HEK293 (cell line): ENCODE measurements at regions of chr20 and their contacts with region 1.

Region 1: GRCh38 chr20:17938871-17939619 is 29.5 kb downstream of the SNX5 start:
- H3K4me3 ChIP-seq: no peak overlapping the region
- H3K27ac ChIP-seq: peak overlapping the region; percentile 19; the same call in 1 of the 2 replicates
- H3K4me1 ChIP-seq: peaks cover 5% of the 10 kb centered on the region; the same call in 1 of the 2 replicates
- CTCF ChIP-seq: peak; percentile 60

Region 2: GRCh38 chr20:17558154-17558940 is 380.7 kb before region 1 on chr20:
- CTCF ChIA-PET with region 1: interaction called, 10 read pairs
- POLR2A ChIA-PET with region 1: no interaction called
- H3K4me3 ChIP-seq: no peak overlapping the region
- H3K27ac ChIP-seq: peak overlapping the region; percentile 38
- H3K4me1 ChIP-seq: peaks cover 16% of the 10 kb centered on the region
- CTCF ChIP-seq: no peak

Region 3: DNA sequence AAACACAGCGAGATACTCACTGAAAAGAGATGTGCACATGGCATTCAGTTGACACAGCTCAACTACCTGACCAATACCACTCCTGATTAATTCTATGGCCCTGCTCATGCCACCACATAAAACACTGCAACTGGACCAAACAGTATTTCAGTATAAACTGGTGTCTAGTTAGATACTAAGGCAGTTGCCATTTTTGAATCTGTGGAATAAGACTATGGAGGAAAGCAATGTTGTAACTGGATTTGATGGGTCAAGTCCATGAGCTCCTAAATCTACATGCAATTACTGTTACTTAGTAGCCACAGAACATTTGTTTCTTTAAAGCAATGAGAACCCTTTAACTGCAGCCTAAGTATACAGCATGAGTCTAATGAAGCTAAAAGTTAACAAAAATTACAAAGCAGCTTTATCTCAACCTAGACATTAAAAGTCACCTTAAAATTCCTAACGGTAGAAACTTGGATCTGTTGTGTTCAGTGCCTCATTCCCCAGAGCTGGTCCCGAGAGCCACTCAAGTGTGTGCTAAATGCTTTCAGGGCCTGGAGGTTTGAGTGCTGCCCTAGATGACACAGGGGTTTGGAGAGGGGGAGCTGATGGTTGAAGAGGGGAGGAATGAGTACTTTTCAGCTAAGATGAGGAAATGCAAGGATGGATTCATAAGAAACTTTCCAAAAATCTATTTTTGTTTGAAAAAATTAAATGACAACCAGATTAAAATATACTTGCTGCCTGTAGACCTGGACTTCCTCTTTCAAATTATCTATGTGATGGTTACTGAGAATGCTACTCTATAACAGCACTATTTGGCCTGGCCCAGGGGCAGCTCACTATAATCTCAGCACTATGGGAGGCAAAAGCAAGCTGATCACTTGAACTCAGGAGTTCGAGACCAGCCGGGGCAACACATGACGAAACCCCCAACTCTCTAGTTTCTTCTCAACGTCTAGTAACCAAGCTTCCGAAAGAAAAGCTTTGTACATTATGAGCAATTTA is 13.9 kb after region 1 on chr20:
- CTCF ChIA-PET with region 1: interaction called, 10 read pairs
- POLR2A ChIA-PET with region 1: interaction called, 4 read pairs
- H3K4me3 ChIP-seq: no peak overlapping the region
- H3K27ac ChIP-seq: no peak overlapping the region
- H3K4me1 ChIP-seq: no peaks in the 10 kb centered on the region
- CTCF ChIP-seq: no peak